Activated naive CD8-positive, alpha-beta T cell treated with anti-CD3 and anti-CD28 coated beads, Interleukin-2, amount 10 ng/mL, durations not matched to agents 7 days and 5 days (primary cell): ENCODE measurements at regions of chr6 and their contacts with region 1.

Region 1: DNA sequence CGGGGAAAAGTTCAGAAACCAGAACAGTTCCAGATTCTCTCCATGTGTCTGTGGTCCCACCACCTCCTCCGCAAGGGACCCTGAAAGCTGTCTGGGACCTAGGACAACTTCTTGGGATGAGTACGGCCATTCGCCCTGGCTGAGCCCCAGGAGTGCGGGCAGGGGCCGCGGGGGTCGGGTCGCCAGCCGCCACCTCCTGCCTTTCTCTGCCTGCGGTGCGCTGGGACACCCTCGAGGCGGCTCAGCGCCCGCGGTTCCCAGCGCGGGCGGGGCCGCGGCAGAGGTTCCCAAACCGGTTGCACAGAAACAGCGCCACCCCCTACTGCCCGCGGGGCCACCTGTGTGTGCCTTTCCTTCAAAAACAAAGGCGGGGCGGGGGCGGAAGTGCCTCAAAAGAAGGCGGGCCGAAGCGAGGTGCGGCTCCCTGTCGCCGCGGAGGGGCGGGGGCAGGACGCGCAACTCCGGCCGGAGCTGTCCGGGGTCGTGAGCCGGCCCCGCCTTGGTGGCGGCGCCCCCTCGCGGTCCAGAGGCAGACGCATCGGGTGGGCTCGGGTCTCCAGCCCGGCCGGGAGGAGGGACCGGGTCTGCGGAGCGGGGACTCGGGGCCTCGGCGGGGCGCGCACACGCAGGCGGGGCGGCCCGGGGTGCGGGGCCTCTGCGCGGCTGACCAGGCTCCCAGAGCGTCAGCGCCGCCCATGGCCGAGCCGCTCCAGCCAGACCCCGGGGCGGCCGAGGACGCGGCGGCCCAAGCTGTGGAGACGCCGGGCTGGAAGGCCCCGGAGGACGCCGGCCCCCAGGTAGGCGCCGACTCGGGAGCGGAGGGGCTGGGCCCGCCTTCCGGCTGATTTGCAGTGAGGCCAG is at the start of gene HEBP2:
- DNase-seq: peak; percentile 90
- ATAC-seq: peak; percentile 91
- H3K4me3 Mint-ChIP-seq: peak within 1 kb of the TSS; percentile 89
- H3K27ac Mint-ChIP-seq: peak within 1 kb of the TSS; percentile 84
- H3K4me1 Mint-ChIP-seq: peaks cover 16% of the 10 kb centered on the region
- H3K27me3 Mint-ChIP-seq: peaks cover 3% of the 10 kb centered on the region
- total RNA-seq, gene HEBP2: 42.1 to 44.2 TPM

Region 2: GRCh38 chr6:138443979-138444378 is 39.9 kb after region 1 on chr6:
- POLR2A ChIA-PET with region 1: no interaction called
- DNase-seq: no peak
- ATAC-seq: no peak
- H3K4me3 Mint-ChIP-seq: no peak overlapping the region
- H3K27ac Mint-ChIP-seq: no peak overlapping the region
- H3K4me1 Mint-ChIP-seq: no peaks in the 10 kb centered on the region
- H3K27me3 Mint-ChIP-seq: peaks cover 5% of the 10 kb centered on the region

Region 3: GRCh38 chr6:138455746-138456400 is 51.8 kb after region 1 on chr6:
- POLR2A ChIA-PET with region 1: interaction called, 11 read pairs
- DNase-seq: no peak
- ATAC-seq: peak; percentile 85
- H3K4me3 Mint-ChIP-seq: peak overlapping the region; percentile 64
- H3K27ac Mint-ChIP-seq: peak overlapping the region; percentile 88
- H3K4me1 Mint-ChIP-seq: peaks cover 19% of the 10 kb centered on the region
- H3K27me3 Mint-ChIP-seq: peaks cover 3% of the 10 kb centered on the region